ENCODE measurements at regions of chr19 and their contacts with region 1.

Region 1: GRCh38 chr19:49301165-49301865 is 23.7 kb downstream of the SLC6A16 start:
- DNase-seq: no peak
- H3K4me3 ChIP-seq: peak overlapping the region in 2 of 4 donors; percentile 10 to 50
- H3K27ac ChIP-seq: no peak overlapping the region
- H3K4me1 ChIP-seq: peaks cover 0 to 8% (median 6%) of the 10 kb centered on the region in 3 donors
- H3K27me3 ChIP-seq: no peaks in the 10 kb centered on the region
- CTCF ChIP-seq: peak; percentile 78 to 89 (median 84)
- POLR2A ChIP-seq: no peak

Region 2: GRCh38 chr19:49224856-49225255 is 76.5 kb before region 1 on chr19:
- intact Hi-C with region 1: loop called (anchors 5 kb)
- DNase-seq: no peak
- H3K4me3 ChIP-seq: no peak overlapping the region
- H3K27ac ChIP-seq: no peak overlapping the region
- H3K4me1 ChIP-seq: peaks cover 0 to 10% (median 3%) of the 10 kb centered on the region in 3 donors
- H3K27me3 ChIP-seq: peaks cover 0 to 2% (median 0%) of the 10 kb centered on the region in 4 donors
- CTCF ChIP-seq: peak in 5 of 6 experiments; percentile 15 to 77 (median 56)
- POLR2A ChIP-seq: no peak

Region 3: GRCh38 chr19:49340069-49340864 is 39.0 kb after region 1 on chr19:
- intact Hi-C with region 1: no loop called
- DNase-seq: no peak
- H3K4me3 ChIP-seq: peak overlapping the region; percentile 28 to 67 (median 46)
- H3K27ac ChIP-seq: peak overlapping the region; percentile 77 to 95 (median 89)
- H3K4me1 ChIP-seq: peaks cover 19 to 52% (median 27%) of the 10 kb centered on the region in 3 donors
- H3K27me3 ChIP-seq: no peaks in the 10 kb centered on the region
- CTCF ChIP-seq: no peak
- POLR2A ChIP-seq: no peak

Region 4: DNA sequence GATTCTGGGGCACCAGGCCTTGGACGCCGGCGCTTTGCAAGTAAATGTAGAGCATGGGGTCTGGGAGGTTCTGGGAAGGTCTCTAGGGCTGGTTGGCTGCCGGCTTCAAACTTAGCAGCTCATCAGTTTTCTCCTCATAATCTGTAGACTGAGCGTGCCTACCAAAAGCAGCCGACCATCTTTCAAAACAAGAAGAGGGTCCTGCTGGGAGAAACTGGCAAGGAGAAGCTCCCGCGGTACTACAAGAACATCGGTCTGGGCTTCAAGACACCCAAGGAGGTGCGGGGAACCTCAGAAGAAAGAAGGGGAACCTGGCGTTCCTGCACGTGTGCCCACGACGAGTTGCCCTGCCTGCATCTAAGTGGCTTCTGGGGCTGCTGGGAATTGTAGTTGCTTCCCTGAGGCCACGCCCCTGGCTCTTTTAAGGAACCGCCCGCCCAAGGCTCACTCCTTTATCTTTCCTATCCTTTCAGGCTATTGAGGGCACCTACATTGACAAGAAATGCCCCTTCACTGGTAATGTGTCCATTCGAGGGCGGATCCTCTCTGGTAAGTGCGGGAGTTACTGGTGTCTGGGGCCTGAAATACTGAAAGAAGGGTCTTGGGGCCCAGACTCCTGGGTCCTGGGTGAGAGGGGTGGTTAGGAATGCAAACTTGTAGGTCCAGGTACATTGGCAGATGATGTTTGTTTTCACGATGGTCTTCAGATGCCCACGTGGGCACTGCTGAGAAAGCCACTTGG is 195.9 kb after region 1 on chr19:
- intact Hi-C with region 1: no loop called
- DNase-seq: no peak
- H3K4me3 ChIP-seq: peak overlapping the region; percentile 66 to 98 (median 76)
- H3K27ac ChIP-seq: peak overlapping the region; percentile 94 to 99 (median 96)
- H3K4me1 ChIP-seq: peaks cover 39 to 60% (median 39%) of the 10 kb centered on the region in 3 donors
- H3K27me3 ChIP-seq: no peaks in the 10 kb centered on the region
- CTCF ChIP-seq: no peak
- POLR2A ChIP-seq: peak in 1 of 4 donors; percentile 64